ENCODE measurements at regions of chr3 and their contacts with region 1.

Region 1: GRCh38 chr3:50337191-50337841 is 3.3 kb downstream of the RASSF1 start:
- DNase-seq: peak; percentile 93
- ATAC-seq: peak; percentile 69
- H3K4me3 Mint-ChIP-seq: peak overlapping the region; percentile 99
- H3K27ac Mint-ChIP-seq: peak overlapping the region; percentile 99
- H3K4me1 Mint-ChIP-seq: peaks cover 43% of the 10 kb centered on the region
- H3K27me3 Mint-ChIP-seq: no peaks in the 10 kb centered on the region

Region 2: DNA sequence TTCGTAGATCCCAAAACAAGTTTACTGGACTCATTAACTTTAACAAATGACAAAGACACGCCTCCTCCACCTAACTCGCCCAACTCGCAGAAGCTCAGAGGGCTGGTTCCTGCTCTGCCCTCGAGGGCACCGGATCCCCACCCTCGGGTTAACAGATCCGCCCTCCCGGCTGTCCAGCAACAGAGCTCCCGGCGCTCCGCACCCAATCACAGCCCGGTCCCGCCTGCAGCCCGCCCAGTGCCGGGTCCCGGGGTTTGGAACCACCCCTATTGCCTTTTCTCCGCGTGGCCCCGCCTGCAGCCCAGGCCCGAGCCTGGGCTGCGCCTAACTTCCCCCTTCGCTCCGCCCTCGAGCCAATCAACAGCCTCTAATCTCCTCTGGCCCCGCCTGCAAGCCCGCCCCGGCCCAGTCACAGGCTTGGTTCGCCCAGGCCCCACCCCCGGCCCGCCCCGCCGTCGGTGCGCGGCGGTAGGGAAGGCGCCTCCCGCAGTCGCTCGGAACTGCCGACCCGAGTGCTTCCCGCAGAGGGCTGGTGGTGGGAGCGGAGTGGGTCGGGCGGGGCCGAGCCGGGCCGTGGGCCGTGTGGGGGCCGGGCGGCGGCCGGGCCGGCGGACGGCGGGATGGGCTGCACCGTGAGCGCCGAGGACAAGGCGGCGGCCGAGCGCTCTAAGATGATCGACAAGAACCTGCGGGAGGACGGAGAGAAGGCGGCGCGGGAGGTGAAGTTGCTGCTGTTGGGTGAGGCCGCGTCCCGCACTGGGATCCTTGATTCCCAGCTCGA is 101.4 kb before region 1 on chr3 and contains the start of gene GNAI2:
- POLR2A ChIA-PET with region 1: interaction called, 28 read pairs
- DNase-seq: peak; percentile 98
- ATAC-seq: peak; percentile 90
- H3K4me3 Mint-ChIP-seq: peak within 1 kb of the TSS; percentile 100
- H3K27ac Mint-ChIP-seq: peak within 1 kb of the TSS; percentile 99
- H3K4me1 Mint-ChIP-seq: peaks cover 22% of the 10 kb centered on the region
- H3K27me3 Mint-ChIP-seq: no peaks in the 10 kb centered on the region
- total RNA-seq, gene GNAI2: 435 to 448 TPM

Region 3: GRCh38 chr3:50292159-50293078 is 44.9 kb before region 1 on chr3 and contains the start of gene IFRD2:
- POLR2A ChIA-PET with region 1: interaction called, 89 read pairs
- DNase-seq: peak; percentile 90
- ATAC-seq: peak; percentile 98
- H3K4me3 Mint-ChIP-seq: peak within 1 kb of the TSS; percentile 88
- H3K27ac Mint-ChIP-seq: peak within 1 kb of the TSS; percentile 99
- H3K4me1 Mint-ChIP-seq: peaks cover 15% of the 10 kb centered on the region
- H3K27me3 Mint-ChIP-seq: no peaks in the 10 kb centered on the region
- total RNA-seq, gene IFRD2: 50.0 to 59.0 TPM

Region 4: DNA sequence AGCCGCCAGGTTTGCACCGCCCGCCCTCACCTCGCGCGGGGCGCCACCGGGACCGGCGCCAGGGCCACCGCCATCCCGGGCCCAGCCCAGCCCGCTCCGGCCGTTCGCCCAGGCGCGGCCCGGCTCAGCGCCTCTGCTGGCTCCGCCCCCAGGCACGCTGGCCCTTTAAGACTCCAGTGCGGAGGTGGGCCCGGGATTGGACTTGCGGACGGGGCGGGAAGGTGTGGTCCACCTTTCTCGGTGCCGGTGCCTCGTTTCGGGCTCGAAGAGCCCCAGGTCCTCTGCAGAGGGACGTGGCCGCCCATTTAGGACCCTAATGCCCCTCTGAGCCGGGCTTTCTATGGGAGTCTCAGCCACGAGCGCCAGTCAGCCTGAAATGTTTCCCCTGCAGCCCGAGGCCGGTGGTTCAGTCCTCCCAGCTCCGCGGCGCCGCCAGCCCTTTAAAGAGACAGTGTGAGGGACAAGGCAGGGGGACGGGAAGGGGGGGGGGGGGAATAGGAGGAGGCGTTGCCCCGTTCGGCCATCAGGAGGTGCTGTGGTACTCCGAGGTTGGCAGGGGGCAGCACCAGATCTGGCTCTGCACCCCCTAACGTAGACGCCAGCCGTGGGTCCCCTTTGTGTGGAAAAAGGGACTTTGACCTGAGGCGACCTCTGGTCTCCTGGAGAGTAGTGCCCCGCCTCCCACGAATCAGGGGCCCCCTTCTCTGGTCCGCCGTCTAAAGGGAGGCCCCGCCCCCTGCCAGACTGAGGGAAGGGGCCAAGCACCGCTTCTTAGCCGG is 15.8 kb before region 1 on chr3:
- POLR2A ChIA-PET with region 1: interaction called, 26 read pairs
- DNase-seq: peak; percentile 91
- ATAC-seq: peak; percentile 75
- H3K4me3 Mint-ChIP-seq: peak overlapping the region; percentile 82
- H3K27ac Mint-ChIP-seq: peak overlapping the region; percentile 93
- H3K4me1 Mint-ChIP-seq: peaks cover 23% of the 10 kb centered on the region
- H3K27me3 Mint-ChIP-seq: no peaks in the 10 kb centered on the region

Region 5: GRCh38 chr3:50611464-50612233 is 274.3 kb after region 1 on chr3 and contains the start of gene CISH:
- POLR2A ChIA-PET with region 1: interaction called, 439 read pairs
- DNase-seq: peak; percentile 98
- ATAC-seq: peak; percentile 63
- H3K4me3 Mint-ChIP-seq: peak within 1 kb of the TSS; percentile 97
- H3K27ac Mint-ChIP-seq: peak within 1 kb of the TSS; percentile 100
- H3K4me1 Mint-ChIP-seq: peaks cover 36% of the 10 kb centered on the region
- H3K27me3 Mint-ChIP-seq: no peaks in the 10 kb centered on the region
- total RNA-seq, gene CISH: 365 to 400 TPM